Endothelial cell of umbilical vein (primary cell): ENCODE measurements at regions of chr12 and their contacts with region 1.

Region 1: GRCh38 chr12:28107679-28108078 is 82.6 kb upstream of the CCDC91 start:
- DNase-seq: no peak
- H3K4me3 ChIP-seq: no peak overlapping the region
- H3K27ac ChIP-seq: no peak overlapping the region
- H3K4me1 ChIP-seq: no peaks in the 10 kb centered on the region
- H3K27me3 ChIP-seq: no peaks in the 10 kb centered on the region
- CTCF ChIP-seq: no peak
- POLR2A ChIP-seq: no peak

Region 2: GRCh38 chr12:27644158-27644845 is 463.4 kb before region 1 on chr12:
- CTCF ChIA-PET with region 1: no interaction called
- POLR2A ChIA-PET with region 1: no interaction called
- dilution Hi-C with region 1: no loop called
- intact Hi-C with region 1: no loop called
- DNase-seq: peak; percentile 55
- H3K4me3 ChIP-seq: no peak overlapping the region
- H3K27ac ChIP-seq: no peak overlapping the region
- H3K4me1 ChIP-seq: peaks cover 27% of the 10 kb centered on the region
- H3K27me3 ChIP-seq: no peaks in the 10 kb centered on the region
- CTCF ChIP-seq: no peak
- POLR2A ChIP-seq: no peak

Region 3: DNA sequence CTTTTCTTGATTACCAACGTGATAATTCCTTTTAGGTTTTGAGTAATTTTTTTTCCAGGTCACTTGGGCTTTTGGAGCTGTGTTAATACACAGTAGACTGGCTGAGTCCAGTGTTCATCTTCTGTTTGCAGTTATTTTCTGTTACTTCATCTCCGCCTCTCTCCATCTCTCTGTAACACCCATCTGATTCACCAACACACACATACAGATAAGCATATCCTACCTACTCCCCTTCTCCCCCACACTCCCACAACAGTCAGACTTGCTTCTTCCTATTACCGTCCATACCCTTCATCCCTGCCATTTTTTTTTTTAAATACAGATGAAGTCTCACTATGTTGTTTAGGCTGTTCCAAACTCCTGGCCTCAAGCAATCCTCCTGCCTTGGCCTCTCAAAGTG is 254.9 kb before region 1 on chr12:
- CTCF ChIA-PET with region 1: no interaction called
- POLR2A ChIA-PET with region 1: no interaction called
- dilution Hi-C with region 1: no loop called
- intact Hi-C with region 1: no loop called
- DNase-seq: no peak
- H3K4me3 ChIP-seq: no peak overlapping the region
- H3K27ac ChIP-seq: no peak overlapping the region
- H3K4me1 ChIP-seq: no peaks in the 10 kb centered on the region
- H3K27me3 ChIP-seq: peaks cover 0 to 7% of the 10 kb centered on the region in 2 experiments
- CTCF ChIP-seq: no peak
- POLR2A ChIP-seq: no peak

Region 4: GRCh38 chr12:28023156-28023887 is 84.4 kb before region 1 on chr12:
- CTCF ChIA-PET with region 1: no interaction called
- POLR2A ChIA-PET with region 1: no interaction called
- dilution Hi-C with region 1: no loop called
- intact Hi-C with region 1: no loop called
- DNase-seq: peak; percentile 74
- H3K4me3 ChIP-seq: no peak overlapping the region
- H3K27ac ChIP-seq: peak overlapping the region; percentile 90
- H3K4me1 ChIP-seq: peaks cover 10% of the 10 kb centered on the region
- H3K27me3 ChIP-seq: no peaks in the 10 kb centered on the region
- CTCF ChIP-seq: no peak
- POLR2A ChIP-seq: no peak

Region 5: DNA sequence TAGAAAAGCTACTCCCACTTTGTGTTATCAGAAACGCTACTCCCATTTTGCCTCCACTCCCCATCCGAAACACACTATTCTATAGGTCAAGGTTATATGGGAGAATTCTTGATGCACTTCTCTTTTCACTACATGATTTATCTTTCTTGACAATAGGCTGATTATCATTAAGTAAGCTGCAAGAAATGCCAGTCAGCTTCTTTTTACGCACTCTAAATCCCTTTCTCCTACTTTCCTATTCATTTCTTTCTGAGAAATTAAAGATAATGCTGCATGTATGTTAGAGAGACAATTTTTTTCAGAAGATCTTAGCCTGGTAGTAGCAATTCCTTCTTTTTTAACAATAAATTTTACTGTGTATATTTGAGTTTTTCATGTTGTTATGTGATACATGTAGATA is 41.6 kb after region 1 on chr12:
- CTCF ChIA-PET with region 1: no interaction called
- POLR2A ChIA-PET with region 1: no interaction called
- dilution Hi-C with region 1: no loop called
- intact Hi-C with region 1: loop called (anchors 2 kb)
- DNase-seq: no peak
- H3K4me3 ChIP-seq: no peak overlapping the region
- H3K27ac ChIP-seq: no peak overlapping the region
- H3K4me1 ChIP-seq: no peaks in the 10 kb centered on the region
- H3K27me3 ChIP-seq: no peaks in the 10 kb centered on the region
- CTCF ChIP-seq: no peak
- POLR2A ChIP-seq: no peak

Region 6: GRCh38 chr12:28184375-28184774 is 76.7 kb after region 1 on chr12:
- CTCF ChIA-PET with region 1: no interaction called
- POLR2A ChIA-PET with region 1: no interaction called
- dilution Hi-C with region 1: no loop called
- intact Hi-C with region 1: no loop called
- DNase-seq: no peak
- H3K4me3 ChIP-seq: no peak overlapping the region
- H3K27ac ChIP-seq: no peak overlapping the region
- H3K4me1 ChIP-seq: no peaks in the 10 kb centered on the region
- H3K27me3 ChIP-seq: no peaks in the 10 kb centered on the region
- CTCF ChIP-seq: no peak
- POLR2A ChIP-seq: no peak